SK-MEL-5 (cell line): ENCODE measurements at regions of chr20 and their contacts with region 1.

Region 1: DNA sequence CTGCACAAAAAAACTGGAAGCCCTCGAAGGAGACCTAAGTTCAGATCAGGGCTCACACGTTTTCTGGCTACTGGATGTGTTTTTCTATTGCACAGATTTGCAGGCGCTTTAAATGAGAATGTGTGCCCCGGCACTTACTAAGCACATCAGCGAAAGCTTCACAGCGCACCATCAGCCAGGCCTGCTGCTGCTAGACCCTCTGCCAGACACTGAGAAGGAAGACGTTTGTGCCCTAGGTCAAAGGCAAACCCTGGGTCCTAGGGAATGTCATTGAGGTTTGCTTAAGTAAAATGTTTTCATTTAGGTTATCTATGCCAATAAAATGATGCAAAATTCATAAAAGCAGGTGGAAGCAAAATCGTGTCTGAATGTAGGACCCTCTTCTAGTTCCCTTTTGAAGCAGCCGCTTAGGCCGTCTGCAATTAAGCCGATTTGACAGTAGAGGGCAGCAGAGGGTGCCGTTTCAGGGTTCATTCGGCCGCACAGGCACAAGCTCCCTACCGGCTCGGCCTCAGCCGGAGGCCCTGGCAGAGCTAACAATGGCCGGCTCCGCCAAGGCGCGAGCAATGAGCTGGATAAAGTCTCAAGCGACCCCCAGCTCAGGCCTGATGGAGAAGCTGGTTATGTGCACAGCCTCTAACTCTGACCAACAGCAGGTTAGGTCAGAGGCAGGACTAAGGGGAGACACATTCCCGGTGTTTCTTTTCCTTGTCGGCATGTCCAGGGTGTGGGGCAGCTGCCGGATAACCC is 107.2 kb upstream of the FOXA2 start:
- DNase-seq: peak; percentile 81

Region 2: GRCh38 chr20:22333885-22334545 is 357.5 kb before region 1 on chr20:
- in situ Hi-C with region 1: loop called (anchors 25 kb)
- DNase-seq: peak; percentile 75

Region 3: GRCh38 chr20:22744341-22745193 is 53.0 kb after region 1 on chr20:
- in situ Hi-C with region 1: no loop called
- DNase-seq: no peak